ENCODE measurements at regions of chr5 and their contacts with region 1.

Region 1: GRCh38 chr5:141564216-141564692 is 54.5 kb downstream of the DIAPH1 start:
- DNase-seq: peak in 1 of 2 donors; percentile 86
- ATAC-seq: peak; percentile 39 to 69 (median 57)
- H3K4me3 ChIP-seq: no peak overlapping the region
- H3K27ac ChIP-seq: peak overlapping the region in 9 of 10 donors; percentile 39 to 78 (median 62)
- H3K4me1 ChIP-seq: peaks cover 4 to 51% (median 30%) of the 10 kb centered on the region in 9 donors
- H3K27me3 ChIP-seq: no peaks in the 10 kb centered on the region
- CTCF ChIP-seq: peak; percentile 89 to 99 (median 94)

Region 2: GRCh38 chr5:141100240-141100805 is 463.9 kb before region 1 on chr5 and contains the start of gene PCDHB3:
- intact Hi-C with region 1: loop called in 1 of 10 experiments (anchors 5 kb)
- DNase-seq: peak in 1 of 2 donors; percentile 40
- ATAC-seq: peak in 6 of 8 donors; percentile 41 to 73 (median 63)
- H3K4me3 ChIP-seq: peak within 1 kb of the TSS in 9 of 10 donors; percentile 25 to 50 (median 35)
- H3K27ac ChIP-seq: peak within 1 kb of the TSS in 3 of 10 donors; percentile 3 to 51 (median 43)
- H3K4me1 ChIP-seq: no peaks in the 10 kb centered on the region
- H3K27me3 ChIP-seq: peaks cover 0 to 73% (median 25%) of the 10 kb centered on the region in 7 donors
- CTCF ChIP-seq: peak in 8 of 9 donors; percentile 22 to 55 (median 47)
- total RNA-seq, gene PCDHB3: 0.40 to 2.0 (median 1.1) TPM

Region 3: DNA sequence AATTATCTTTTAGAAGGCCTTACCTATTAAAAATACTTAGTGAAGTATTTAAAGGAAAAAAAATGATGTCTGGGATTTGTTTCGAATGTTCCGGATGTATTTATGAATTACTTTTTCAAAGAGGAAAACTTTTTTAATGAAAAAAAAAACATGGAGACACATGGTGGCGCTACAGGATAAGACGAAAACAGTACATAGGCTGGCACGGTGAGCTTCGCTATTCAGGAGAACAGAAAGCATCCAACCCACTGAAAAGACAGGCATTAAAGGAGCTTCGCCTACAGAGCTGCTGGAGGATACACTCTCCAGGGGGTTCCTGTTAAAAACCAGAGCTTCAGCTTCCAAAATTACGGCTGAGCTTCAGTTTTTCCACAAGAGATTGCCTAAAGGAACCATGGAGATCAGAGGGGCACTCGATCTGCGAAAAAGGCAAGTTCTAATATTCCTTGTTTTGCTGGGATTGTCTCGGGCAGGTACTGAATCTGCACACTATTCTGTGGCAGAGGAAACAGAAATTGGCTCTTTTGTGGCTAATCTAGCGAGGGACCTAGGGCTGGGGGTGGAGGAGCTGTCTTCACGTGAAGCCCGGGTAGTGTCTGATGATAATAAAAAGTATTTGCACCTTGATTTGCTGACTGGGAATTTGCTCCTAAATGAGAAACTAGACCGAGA is 341.0 kb before region 1 on chr5 and contains the start of gene PCDHB14:
- intact Hi-C with region 1: loop called in 5 of 10 experiments (anchors 5 to 10 kb)
- DNase-seq: no peak
- ATAC-seq: peak in 1 of 8 donors; percentile 65
- H3K4me3 ChIP-seq: peak within 1 kb of the TSS in 7 of 10 donors; percentile 12 to 40 (median 29)
- H3K27ac ChIP-seq: no peak within 1 kb of the TSS
- H3K4me1 ChIP-seq: no peaks in the 10 kb centered on the region
- H3K27me3 ChIP-seq: peaks cover 0 to 13% (median 0%) of the 10 kb centered on the region in 7 donors
- CTCF ChIP-seq: peak in 6 of 9 donors; percentile 15 to 43 (median 26)
- total RNA-seq, gene PCDHB14: 1.4 to 9.0 (median 4.2) TPM

Region 4: DNA sequence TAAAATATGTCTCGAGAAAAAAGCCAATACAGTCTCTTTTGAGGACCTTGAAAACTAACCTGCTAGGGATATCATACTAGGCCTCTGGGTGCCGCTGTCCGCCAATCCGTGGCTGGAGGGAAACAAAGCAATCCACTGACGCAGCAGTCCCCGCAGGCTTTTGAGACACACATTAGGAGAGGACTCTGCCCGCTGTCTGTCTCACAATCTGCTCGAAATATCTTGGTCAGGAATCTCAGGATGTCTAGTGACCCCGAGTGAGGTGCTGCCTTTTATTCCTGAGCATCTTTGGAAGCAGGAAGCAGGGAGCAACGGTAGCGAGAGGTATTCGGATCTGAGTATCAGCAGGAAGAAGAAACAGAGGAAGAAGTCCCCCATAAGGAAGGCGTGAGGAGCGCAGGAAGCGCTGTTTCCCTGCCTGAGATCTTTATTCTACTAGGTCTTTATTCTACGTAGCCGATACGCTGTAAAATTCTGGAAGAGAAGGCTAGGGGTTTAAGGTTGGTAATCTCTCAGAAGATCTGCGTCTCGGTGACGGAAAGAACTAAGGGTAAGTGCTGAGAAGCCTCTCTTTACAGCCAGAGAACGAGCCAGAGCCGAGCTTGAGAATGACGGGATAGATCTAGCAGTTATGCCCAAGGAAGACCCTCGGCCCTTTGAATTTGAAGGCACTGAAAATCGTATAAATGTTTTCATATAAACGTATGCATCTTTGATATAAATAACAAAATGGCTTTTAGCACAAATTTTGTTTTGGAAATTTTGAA is 238.0 kb before region 1 on chr5:
- intact Hi-C with region 1: loop called in 8 of 10 experiments (anchors 2 to 10 kb)
- DNase-seq: peak; percentile 70 to 75
- ATAC-seq: peak; percentile 76 to 96 (median 88)
- H3K4me3 ChIP-seq: peak overlapping the region; percentile 29 to 63 (median 50)
- H3K27ac ChIP-seq: peak overlapping the region; percentile 5 to 83 (median 77)
- H3K4me1 ChIP-seq: peaks cover 0 to 19% (median 0%) of the 10 kb centered on the region in 9 donors
- H3K27me3 ChIP-seq: peaks cover 0 to 15% (median 0%) of the 10 kb centered on the region in 7 donors
- CTCF ChIP-seq: peak; percentile 38 to 73 (median 58)

Region 5: DNA sequence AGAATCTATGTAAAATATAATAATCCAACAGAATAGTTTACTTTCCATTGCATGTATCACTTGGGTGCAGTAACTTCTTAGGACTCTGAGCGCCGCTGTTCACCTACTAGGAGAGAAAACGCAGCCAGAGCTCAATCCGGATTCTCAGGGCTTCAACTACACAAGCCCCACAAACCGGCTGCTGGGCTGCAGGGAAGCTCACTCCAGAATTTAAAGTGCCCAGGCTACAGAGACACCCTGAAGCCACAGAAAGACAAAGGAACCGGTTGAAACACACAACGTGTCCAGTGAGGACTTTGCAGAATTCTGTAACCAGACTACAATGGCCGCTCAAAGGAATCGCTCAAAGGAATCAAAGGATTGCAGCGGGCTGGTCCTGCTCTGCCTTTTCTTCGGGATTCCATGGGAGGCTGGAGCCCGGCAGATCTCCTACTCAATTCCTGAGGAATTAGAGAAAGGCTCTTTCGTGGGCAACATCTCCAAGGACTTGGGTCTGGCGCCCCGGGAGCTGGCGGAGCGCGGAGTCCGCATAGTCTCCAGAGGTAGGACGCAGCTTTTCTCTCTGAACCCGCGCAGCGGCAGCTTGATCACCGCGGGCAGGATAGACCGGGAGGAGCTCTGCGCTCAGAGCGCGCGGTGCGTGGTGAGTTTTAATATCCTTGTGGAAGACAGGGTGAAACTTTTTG is 151.3 kb before region 1 on chr5 and contains the start of gene PCDHGA10:
- intact Hi-C with region 1: loop called in 9 of 10 experiments (anchors 2 to 10 kb)
- DNase-seq: no peak
- ATAC-seq: peak in 6 of 8 donors; percentile 55 to 65 (median 60)
- H3K4me3 ChIP-seq: peak within 1 kb of the TSS in 9 of 10 donors; percentile 5 to 48 (median 34)
- H3K27ac ChIP-seq: peak within 1 kb of the TSS in 4 of 10 donors; percentile 1 to 24 (median 8)
- H3K4me1 ChIP-seq: peaks cover 0 to 19% (median 0%) of the 10 kb centered on the region in 9 donors
- H3K27me3 ChIP-seq: peaks cover 0 to 96% (median 0%) of the 10 kb centered on the region in 7 donors
- CTCF ChIP-seq: peak; percentile 18 to 59 (median 52)
- total RNA-seq, gene PCDHGA10: 4.3 to 7.8 (median 6.7) TPM

Region 6: DNA sequence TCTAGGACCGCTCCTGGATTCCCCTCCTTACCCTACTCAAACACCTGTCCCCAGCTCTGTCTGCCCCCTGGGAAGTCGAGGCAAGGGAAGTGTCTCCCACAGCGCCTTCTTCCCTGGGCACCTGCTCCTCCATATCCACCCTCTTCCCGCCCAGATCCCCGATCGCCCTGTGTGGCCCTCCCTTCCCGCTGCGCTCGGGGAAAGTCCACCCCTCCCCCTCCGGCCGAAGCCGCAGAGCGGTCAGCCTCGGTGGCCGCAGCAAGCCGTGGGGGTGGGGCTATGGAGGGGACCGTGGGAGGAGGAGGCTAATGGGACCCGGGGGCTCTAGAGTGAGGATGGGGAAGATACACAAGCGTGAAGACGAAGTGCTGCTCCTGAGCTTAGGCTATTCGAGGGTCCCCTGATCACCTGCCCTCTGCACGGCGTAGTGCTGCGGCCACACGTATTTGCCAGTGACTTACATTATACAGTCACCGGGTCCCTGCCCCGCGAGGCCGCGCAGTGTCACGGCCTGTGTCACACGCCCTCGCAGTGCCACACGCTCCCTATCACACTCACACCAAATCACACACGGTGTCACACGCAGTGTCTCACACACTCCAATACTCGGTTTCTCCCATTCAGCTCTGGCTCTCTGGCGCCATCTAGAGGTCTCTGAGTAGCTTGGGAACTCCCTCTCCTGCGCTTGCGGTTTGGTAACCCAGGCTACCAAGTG is 314.6 kb after region 1 on chr5:
- intact Hi-C with region 1: no loop called
- DNase-seq: peak; percentile 77 to 96
- ATAC-seq: peak; percentile 76 to 90 (median 84)
- H3K4me3 ChIP-seq: peak overlapping the region; percentile 38 to 92 (median 84)
- H3K27ac ChIP-seq: peak overlapping the region; percentile 77 to 97 (median 93)
- H3K4me1 ChIP-seq: peaks cover 5 to 95% (median 60%) of the 10 kb centered on the region in 9 donors
- H3K27me3 ChIP-seq: peaks cover 8 to 94% (median 60%) of the 10 kb centered on the region in 7 donors
- CTCF ChIP-seq: peak; percentile 96 to 99 (median 98)

Measured in heart right ventricle (tissue), 16 donors.